Transverse colon (tissue), 4 donors: ENCODE measurements at regions of chr16 and their contacts with region 1.

Region 1: DNA sequence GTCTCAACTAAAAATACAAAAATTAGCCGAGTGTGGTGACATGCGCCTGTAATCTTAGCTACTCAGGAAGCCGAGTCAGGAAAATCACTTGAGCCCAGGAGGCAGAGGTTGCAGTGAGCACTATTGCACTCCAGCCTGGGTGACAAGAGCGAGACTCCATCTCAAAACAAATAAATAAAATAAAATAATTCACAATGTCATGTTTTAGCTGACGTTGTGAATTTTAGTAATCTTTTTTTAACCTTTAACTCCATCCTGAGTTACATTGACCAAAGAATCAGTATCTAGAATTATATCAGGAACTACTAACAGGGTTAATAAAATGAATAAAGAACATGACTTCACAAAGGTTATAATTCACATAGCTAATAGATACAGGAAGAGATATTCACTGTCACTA is 5.9 kb downstream of the RBL2 start:
- DNase-seq: no peak
- H3K4me3 ChIP-seq: no peak overlapping the region
- H3K27ac ChIP-seq: no peak overlapping the region
- H3K4me1 ChIP-seq: peaks cover 7 to 18% (median 12%) of the 10 kb centered on the region in 4 donors
- H3K27me3 ChIP-seq: no peaks in the 10 kb centered on the region
- CTCF ChIP-seq: no peak
- EP300 ChIP-seq: no peak
- POLR2A ChIP-seq: no peak

Region 2: GRCh38 chr16:53249331-53249730 is 190.8 kb before region 1 on chr16:
- in situ Hi-C with region 1: no loop called
- intact Hi-C with region 1: no loop called
- DNase-seq: no peak
- H3K4me3 ChIP-seq: no peak overlapping the region
- H3K27ac ChIP-seq: no peak overlapping the region
- H3K4me1 ChIP-seq: no peaks in the 10 kb centered on the region
- H3K27me3 ChIP-seq: no peaks in the 10 kb centered on the region
- CTCF ChIP-seq: no peak
- EP300 ChIP-seq: no peak
- POLR2A ChIP-seq: no peak

Region 3: GRCh38 chr16:53495325-53495724 is 55.2 kb after region 1 on chr16:
- in situ Hi-C with region 1: loop called in 1 of 4 experiments (anchors 5 kb)
- intact Hi-C with region 1: no loop called
- DNase-seq: no peak
- H3K4me3 ChIP-seq: no peak overlapping the region
- H3K27ac ChIP-seq: no peak overlapping the region
- H3K4me1 ChIP-seq: peaks cover 0 to 18% (median 2%) of the 10 kb centered on the region in 4 donors
- H3K27me3 ChIP-seq: no peaks in the 10 kb centered on the region
- CTCF ChIP-seq: no peak
- EP300 ChIP-seq: no peak
- POLR2A ChIP-seq: no peak